GM10248 (cell line): ENCODE measurements at regions of chr1 and their contacts with region 1.

Region 1: GRCh38 chr1:27643701-27644625 is 9.0 kb upstream of the FGR start:
- DNase-seq: peak; percentile 72
- CTCF ChIP-seq: peak; percentile 80

Region 2: GRCh38 chr1:27609210-27609555 is 34.8 kb before region 1 on chr1:
- CTCF ChIA-PET with region 1: interaction called, 12 read pairs
- POLR2A ChIA-PET with region 1: no interaction called
- DNase-seq: no peak
- CTCF ChIP-seq: no peak

Region 3: DNA sequence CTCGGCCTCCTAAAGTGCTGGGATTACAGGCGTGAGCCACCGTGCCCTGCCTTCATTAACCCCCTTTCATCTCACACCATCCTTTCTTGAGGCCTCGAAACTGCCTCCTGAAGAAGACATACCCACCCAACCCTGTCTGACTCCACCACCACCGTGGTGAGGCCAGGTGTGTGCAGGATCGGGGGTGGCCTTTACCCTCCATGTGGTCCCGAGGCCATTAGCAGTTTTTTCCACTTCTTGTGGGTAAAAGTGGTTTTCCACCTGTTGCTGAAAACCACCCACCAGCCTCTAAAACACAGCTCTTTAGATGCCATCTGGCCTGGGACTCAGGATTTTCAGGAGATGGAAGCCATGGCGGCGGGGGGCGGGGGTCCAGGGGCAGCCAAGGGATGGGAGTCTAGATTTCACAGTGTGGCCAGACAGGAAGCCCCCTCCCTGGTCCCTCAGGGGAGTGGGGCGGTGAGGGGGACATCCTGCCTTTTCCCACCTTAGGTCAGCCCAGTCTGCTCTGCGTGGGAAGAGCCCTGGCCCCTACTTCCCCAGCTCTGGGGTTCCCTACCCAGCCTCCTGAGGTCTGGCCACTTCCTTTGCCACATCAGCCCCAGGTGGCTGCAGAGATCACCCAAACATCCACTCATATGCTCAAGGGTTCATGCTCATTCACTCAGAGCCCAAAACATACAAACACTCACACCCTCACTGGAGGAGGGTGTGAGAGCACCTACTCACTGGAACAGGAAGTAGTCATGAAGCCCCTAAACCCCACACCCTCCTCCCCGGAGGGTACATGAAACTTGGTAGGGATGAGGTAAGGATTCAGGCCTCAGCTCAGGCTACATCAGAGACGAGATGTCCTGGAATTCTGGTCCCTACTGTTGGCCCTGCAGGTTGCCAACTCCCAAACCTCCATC is 11.3 kb before region 1 on chr1:
- CTCF ChIA-PET with region 1: interaction called, 12 read pairs
- POLR2A ChIA-PET with region 1: interaction called, 3 read pairs
- DNase-seq: peak; percentile 67
- CTCF ChIP-seq: no peak

Region 4: GRCh38 chr1:27656157-27656893 is 12.4 kb after region 1 on chr1:
- CTCF ChIA-PET with region 1: interaction called, 26 read pairs
- POLR2A ChIA-PET with region 1: no interaction called
- DNase-seq: no peak
- CTCF ChIP-seq: no peak